Posterior vena cava (tissue), 2 donors: ENCODE measurements at regions of chr1 and their contacts with region 1.

Region 1: DNA sequence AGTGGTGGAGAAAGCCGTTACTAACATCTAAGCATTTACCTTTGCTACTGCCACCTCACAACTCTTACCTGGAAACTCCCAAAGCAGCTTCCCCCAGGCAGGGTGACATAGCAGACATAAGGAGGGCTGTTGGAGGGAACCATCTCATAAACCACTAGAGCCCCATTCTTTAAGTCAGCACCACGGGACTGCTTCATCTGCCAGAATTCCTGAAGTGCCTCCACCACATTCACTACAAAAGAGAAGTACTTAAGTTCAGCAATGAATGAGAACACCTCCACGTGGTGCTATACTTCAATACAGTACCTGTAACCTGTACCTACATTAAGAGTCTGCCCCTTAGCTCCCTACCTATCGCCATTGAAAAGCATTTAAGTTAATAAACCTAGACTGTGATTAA is 10.3 kb downstream of the LIX1L start:
- DNase-seq: no peak

Region 2: DNA sequence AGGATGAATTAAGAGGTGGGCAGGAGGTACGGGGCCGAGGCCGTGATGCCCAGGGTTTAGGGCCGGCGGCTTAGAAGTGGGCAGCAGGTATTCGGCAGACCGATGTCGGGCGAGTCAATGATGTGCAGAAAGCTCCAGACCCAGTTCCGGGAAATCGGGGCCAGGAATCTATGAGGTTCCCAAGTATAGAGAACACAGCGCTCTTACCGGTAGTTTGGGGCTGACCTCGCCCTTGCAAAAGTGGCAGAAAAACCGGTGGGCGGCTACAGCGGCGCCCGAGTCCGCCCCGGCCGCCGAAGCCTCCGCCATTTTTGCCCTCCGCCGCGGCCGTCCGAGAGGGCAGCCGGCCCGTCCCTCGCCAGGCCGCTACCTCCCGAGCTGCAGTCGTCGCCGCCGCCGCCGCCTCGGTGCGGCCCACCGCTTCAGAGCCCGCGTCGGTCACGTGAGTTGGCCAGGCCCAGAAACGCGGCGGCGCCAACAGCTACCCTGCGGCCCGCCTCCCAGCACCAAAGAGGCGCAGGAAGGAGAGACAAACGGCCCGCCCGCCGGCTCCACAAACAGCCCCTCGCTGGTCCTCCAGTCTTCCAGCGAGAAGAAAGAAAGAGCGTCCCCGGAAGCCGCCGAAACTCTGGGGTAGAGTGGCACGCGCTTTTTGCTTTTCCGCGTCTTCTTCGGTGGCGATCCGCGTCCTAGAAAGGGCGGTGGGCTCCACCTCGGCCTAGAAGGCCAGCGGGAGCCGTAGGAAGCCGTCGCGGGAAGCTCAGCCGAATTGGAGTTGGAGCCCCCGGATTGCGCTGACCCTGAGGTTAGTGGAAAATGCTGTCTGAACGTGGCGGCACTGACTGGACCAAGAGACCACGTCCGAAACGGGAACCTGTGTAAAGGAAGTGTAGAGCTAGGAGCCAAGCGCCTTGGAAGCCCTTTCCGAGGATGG is 123.7 kb before region 1 on chr1 and contains the starts of genes POLR3C and RNF115:
- intact Hi-C with region 1: no loop called
- DNase-seq: peak; percentile 97
- total RNA-seq, gene POLR3C: 22.1 to 25.3 TPM
- total RNA-seq, gene RNF115: 28.5 to 69.0 TPM

Region 3: GRCh38 chr1:145963995-145964901 is 16.7 kb after region 1 on chr1 and contains the starts of genes ANKRD34A and POLR3GL:
- intact Hi-C with region 1: loop called in 1 of 2 experiments (anchors 1 kb)
- DNase-seq: peak; percentile 97
- total RNA-seq, gene ANKRD34A: 2.3 TPM
- total RNA-seq, gene POLR3GL: 22.8 to 23.8 TPM